CD8-positive, alpha-beta T cell (primary cell): ENCODE measurements at regions of chr3 and their contacts with region 1.

Region 1: DNA sequence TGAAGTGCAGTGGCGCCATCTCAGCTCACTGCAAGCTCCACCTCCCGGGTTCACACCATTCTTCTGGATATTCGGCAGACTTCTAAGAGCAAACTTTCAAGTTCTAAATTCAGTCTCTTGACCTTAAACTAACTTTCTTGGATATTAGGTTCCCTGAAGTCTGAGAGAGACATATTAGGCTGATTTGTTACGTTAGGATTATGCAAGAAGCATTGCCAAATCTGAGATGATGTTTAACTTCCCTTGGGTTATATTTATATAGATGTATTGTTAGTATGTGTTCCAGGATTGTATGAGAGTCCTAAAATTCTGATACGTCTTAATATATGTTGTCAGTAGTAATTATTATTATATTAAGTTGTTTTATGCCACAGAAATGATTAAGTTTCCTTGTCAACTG is 80.1 kb downstream of the SLC6A1 start:
- DNase-seq: no peak
- ATAC-seq: no peak
- H3K4me3 ChIP-seq: no peak overlapping the region
- H3K4me3 Mint-ChIP-seq: no peak overlapping the region
- H3K27ac ChIP-seq: no peak overlapping the region
- H3K27ac Mint-ChIP-seq: no peak overlapping the region
- H3K4me1 ChIP-seq: no peaks in the 10 kb centered on the region
- H3K4me1 Mint-ChIP-seq: no peaks in the 10 kb centered on the region
- H3K27me3 ChIP-seq: no peaks in the 10 kb centered on the region
- H3K27me3 Mint-ChIP-seq: peaks cover 30% of the 10 kb centered on the region
- CTCF ChIP-seq: no peak

Region 2: GRCh38 chr3:11132861-11133260 is 60.2 kb after region 1 on chr3:
- CTCF ChIA-PET with region 1: no interaction called
- POLR2A ChIA-PET with region 1: no interaction called
- intact Hi-C with region 1: loop called in 1 of 2 experiments (anchors 2 kb)
- DNase-seq: no peak
- ATAC-seq: no peak
- H3K4me3 ChIP-seq: no peak overlapping the region
- H3K4me3 Mint-ChIP-seq: no peak overlapping the region
- H3K27ac ChIP-seq: no peak overlapping the region
- H3K27ac Mint-ChIP-seq: no peak overlapping the region
- H3K4me1 ChIP-seq: no peaks in the 10 kb centered on the region
- H3K4me1 Mint-ChIP-seq: no peaks in the 10 kb centered on the region
- H3K27me3 ChIP-seq: no peaks in the 10 kb centered on the region
- H3K27me3 Mint-ChIP-seq: peaks cover 5% of the 10 kb centered on the region
- CTCF ChIP-seq: no peak